Dorsolateral prefrontal cortex (tissue), 120 donors: ENCODE measurements at regions of chr1 and their contacts with region 1.

Region 1: DNA sequence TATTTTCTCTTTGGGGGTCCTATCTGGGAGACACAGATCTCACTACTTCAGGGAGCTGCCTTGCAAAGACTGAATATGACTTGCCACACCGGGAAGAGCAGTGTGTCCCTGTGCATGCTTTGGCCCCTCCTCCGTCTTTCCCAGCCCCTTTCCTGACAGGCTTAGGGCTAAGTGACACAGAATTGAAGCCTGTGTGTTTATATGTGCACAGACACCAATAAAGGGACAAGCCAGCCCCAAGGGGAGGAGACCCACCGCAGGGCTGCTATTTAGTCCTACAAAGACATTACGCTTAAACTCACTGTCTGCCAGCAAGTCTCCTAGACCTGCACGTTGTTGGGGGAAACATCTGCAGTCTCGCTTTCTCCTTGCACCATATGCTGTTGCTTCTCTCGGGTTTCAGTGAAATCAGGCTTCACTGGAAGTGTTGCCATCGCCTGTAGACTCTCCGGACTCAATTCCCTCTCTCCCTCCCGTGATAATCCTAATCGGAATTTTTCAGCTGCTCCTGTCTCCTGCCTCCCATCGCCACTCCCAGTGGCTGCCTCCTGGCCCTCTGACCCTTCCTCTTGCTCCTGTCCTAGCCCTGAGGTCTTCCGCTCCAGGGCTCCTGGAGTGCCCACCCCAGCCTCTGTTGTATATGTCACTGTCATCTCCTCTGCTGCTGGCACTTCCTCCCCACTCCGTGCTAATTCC is 58.5 kb upstream of the LRRC53 start:
- DNase-seq: peak in 6 of 10 donors; percentile 41 to 51 (median 46)
- H3K4me3 ChIP-seq: peak overlapping the region in 34 of 59 donors; percentile 0 to 46 (median 26)
- H3K27ac ChIP-seq: peak overlapping the region in 46 of 59 donors; percentile 3 to 84 (median 69)
- H3K27me3 ChIP-seq: peaks cover 0 to 4% (median 0%) of the 10 kb centered on the region in 45 donors
- CTCF ChIP-seq: no peak

Region 2: GRCh38 chr1:74485622-74486021 is 85.3 kb before region 1 on chr1:
- intact Hi-C with region 1: no loop called
- DNase-seq: no peak
- H3K4me3 ChIP-seq: no peak overlapping the region
- H3K27ac ChIP-seq: no peak overlapping the region
- H3K27me3 ChIP-seq: no peaks in the 10 kb centered on the region
- CTCF ChIP-seq: no peak

Region 3: DNA sequence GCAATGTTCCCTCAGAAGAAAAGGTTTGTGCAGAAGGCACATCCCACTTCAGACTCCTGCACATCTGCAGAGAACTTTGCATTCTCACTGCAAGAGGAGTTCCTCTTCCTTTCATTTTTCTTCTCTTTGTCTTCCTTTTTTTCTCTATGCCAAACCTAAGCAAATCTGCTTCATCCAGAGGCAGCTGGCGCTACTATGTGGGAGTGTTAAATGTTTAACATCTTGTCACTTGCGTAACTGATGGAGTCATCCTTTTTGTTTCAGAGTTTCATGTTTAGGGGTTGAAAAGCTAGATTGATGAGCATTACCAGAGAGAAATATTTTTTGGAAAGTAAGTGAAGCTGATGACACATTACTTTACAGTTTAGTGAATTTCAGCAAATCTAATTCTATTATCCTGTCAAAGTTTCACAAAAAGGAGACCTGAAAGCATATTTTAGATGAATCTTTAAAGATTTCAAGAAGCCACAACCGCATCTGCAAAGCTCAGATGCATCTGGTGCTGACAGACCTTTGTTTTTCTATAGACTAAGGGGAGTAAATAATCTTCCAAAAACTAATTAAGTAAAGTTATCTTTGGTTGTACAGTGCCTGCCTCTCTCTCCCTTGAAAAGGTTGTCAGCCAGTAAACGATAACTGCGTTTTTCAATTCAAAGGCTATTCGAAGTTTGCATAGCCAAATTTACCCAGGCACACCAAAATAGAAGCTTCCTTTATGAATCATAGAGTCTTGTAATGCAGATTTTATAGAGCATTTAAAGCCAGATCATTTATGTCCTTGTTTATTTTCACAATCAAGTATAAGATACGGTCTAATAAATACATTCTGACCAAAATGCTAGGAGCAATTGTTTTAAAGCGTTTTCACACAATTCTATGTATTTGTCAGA is 57.3 kb before region 1 on chr1:
- intact Hi-C with region 1: loop called in 1 of 2 experiments (anchors 2 kb)
- DNase-seq: peak in 3 of 10 donors; percentile 40 to 53 (median 42)
- H3K4me3 ChIP-seq: no peak overlapping the region
- H3K27ac ChIP-seq: peak overlapping the region in 53 of 59 donors; percentile 9 to 89 (median 69)
- H3K27me3 ChIP-seq: no peaks in the 10 kb centered on the region
- CTCF ChIP-seq: no peak

Region 4: GRCh38 chr1:74548961-74549750 is 21.8 kb before region 1 on chr1:
- intact Hi-C with region 1: no loop called
- DNase-seq: no peak
- H3K4me3 ChIP-seq: no peak overlapping the region
- H3K27ac ChIP-seq: no peak overlapping the region
- H3K27me3 ChIP-seq: no peaks in the 10 kb centered on the region
- CTCF ChIP-seq: no peak

Region 5: DNA sequence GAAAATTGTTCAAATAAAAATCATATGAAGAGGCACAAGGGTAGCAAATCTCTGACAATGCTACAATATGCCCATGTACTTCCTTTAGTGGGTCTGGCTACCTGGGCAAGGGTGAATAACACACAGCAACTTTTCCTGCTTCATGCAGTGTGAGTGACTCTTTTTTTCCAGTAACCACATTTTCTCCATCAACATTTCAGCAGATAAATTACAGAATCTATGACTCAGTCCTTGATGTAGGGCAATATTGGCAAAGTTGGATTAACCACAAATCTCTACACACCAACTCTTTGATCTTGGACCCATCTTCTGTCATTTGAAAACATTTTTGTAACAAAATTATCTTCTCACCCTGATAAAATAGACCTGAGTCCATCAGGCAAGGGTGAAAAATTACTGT is 70.9 kb after region 1 on chr1:
- intact Hi-C with region 1: no loop called
- DNase-seq: no peak
- H3K4me3 ChIP-seq: no peak overlapping the region
- H3K27ac ChIP-seq: no peak overlapping the region
- H3K27me3 ChIP-seq: no peaks in the 10 kb centered on the region
- CTCF ChIP-seq: no peak